Activated CD4-positive, alpha-beta T cell treated with anti-CD3 and anti-CD28 coated beads, Interleukin-2, amount 10 ng/mL, durations not matched to agents 24 days and 14 days (primary cell): ENCODE measurements at regions of chr6 and their contacts with region 1.

Region 1: GRCh38 chr6:163956571-163957407 is 542.3 kb downstream of the QKI start:
- DNase-seq: peak; percentile 87
- H3K4me3 Mint-ChIP-seq: no peak overlapping the region
- H3K27ac Mint-ChIP-seq: no peak overlapping the region
- H3K4me1 Mint-ChIP-seq: no peaks in the 10 kb centered on the region
- H3K27me3 Mint-ChIP-seq: peaks cover 23% of the 10 kb centered on the region

Region 2: GRCh38 chr6:163170294-163170883 is 786.4 kb before region 1 on chr6:
- intact Hi-C with region 1: loop called (anchors 5 kb)
- DNase-seq: peak; percentile 72
- H3K4me3 Mint-ChIP-seq: no peak overlapping the region
- H3K27ac Mint-ChIP-seq: no peak overlapping the region
- H3K4me1 Mint-ChIP-seq: peaks cover 2% of the 10 kb centered on the region
- H3K27me3 Mint-ChIP-seq: no peaks in the 10 kb centered on the region

Region 3: DNA sequence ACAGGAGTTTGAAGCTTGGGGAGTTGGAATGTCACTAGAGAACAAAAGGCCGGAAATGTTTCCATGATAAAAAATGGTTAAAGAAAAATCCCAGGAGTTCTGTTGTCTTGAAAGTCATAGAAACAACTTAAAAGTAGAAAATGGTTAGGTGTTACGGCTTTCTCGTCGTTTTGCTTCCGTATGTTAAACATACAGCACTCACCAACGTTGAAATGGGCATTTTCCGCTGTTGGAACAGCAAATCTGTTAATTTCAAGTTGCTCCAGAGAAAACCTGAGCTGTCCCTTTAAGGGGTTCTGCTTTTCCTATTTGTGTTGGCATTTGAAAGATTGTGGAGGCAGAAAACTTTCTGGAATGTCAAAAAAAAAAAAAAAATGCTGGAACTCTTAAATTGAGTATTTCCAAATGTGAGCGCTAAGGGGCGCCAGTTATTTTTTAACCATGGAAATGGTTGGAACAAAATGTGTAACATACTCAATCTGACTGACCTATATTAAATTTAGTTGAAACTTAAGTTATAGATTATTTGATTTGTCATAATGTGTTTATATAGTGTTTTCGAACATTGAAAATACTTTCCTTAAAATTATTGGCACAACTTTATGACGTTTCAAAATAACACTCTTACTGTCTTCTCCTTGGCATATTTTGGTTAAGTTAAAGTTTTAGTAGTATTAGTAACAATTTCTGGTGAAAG is 540.1 kb before region 1 on chr6:
- intact Hi-C with region 1: loop called (anchors 2 kb)
- DNase-seq: peak; percentile 81
- H3K4me3 Mint-ChIP-seq: peak overlapping the region; percentile 91
- H3K27ac Mint-ChIP-seq: peak overlapping the region; percentile 89
- H3K4me1 Mint-ChIP-seq: peaks cover 42% of the 10 kb centered on the region
- H3K27me3 Mint-ChIP-seq: no peaks in the 10 kb centered on the region

Region 4: DNA sequence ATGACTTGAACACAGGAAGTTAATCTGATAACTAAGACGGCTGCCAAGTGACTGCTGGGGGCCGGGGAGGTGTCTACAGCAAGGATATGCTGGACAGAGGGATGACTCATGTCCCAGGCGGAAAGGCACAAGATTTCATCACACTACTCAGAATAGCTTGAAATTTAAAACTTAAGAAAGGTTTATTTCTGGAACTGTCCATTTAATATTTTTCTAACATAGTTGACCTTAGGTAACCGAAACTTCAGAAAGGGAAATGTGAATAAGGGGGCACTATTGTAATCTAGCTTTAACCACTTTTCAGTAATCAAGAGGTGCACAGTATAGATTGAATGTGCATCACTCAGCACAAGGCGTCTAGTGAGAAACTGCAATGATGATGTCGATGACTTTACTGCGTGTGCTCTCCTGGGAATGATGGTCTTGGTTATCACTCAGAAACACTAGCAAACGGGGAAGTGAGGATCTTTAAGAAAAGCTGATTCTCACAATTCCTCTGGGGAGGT is 370.8 kb before region 1 on chr6:
- intact Hi-C with region 1: loop called (anchors 10 kb)
- DNase-seq: no peak
- H3K4me3 Mint-ChIP-seq: no peak overlapping the region
- H3K27ac Mint-ChIP-seq: no peak overlapping the region
- H3K4me1 Mint-ChIP-seq: peaks cover 3% of the 10 kb centered on the region
- H3K27me3 Mint-ChIP-seq: no peaks in the 10 kb centered on the region